ENCODE measurements at regions of chr14 and their contacts with region 1.

Region 1: GRCh38 chr14:102442241-102443211 is 67.0 kb downstream of the ANKRD9 start:
- DNase-seq: no peak

Region 2: GRCh38 chr14:102509744-102510615 is 67.5 kb after region 1 on chr14 and contains the start of gene ANKRD9:
- in situ Hi-C with region 1: loop called (anchors 10 kb)
- DNase-seq: peak; percentile 94
- total RNA-seq, gene ANKRD9: 39.7 and 47.9 TPM in 2 replicates

Measured in SK-MEL-5 (cell line).